Left lung (tissue), 14 donors: ENCODE measurements at regions of chr7 and their contacts with region 1.

Region 1: DNA sequence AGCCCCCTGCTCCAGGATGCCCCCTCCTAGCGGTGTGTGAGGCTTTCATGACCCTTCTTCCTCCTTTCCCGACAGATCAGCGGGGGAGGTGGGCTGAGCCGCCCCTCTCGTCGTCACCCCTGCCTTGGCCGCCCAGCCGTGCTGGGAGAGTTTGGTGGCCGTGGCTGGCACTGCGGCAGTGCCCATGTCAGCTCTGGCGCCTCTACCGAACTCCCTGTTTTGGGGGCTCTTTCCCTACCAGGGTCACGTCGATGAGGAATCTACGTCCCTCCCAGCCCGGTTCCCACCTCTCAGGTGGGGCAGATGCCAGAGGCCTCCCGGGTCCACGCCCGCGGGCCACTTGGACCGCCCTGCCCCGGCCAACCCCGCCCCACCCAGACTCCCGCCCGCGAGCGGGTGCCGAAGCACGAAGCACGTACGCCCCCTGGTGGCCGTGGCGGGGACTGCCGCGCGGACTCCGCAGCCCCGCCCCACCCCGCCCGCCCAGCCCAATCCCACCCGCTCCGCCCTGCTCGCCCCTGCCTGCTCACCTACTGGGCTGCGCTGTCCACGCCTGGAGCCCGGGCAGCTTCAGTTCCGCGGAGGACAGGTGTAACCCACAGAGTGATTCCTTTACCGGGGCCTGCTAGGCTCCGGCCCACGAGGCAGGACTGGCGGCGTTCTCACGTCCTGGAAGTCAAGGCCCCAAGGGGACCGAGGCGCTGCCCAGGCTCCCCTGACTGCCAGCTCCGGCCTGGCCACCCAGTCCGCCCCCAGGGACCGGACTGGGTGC is 127.1 kb downstream of the UBE2H start:
- DNase-seq: peak; percentile 84 to 100 (median 90)
- ATAC-seq: peak; percentile 88
- H3K4me3 ChIP-seq: peak overlapping the region; percentile 61 to 81
- H3K27ac ChIP-seq: peak overlapping the region; percentile 53 to 56
- H3K4me1 ChIP-seq: peaks cover 7 to 37% of the 10 kb centered on the region in 2 donors
- H3K27me3 ChIP-seq: no peaks in the 10 kb centered on the region
- CTCF ChIP-seq: peak; percentile 93 to 99

Region 2: DNA sequence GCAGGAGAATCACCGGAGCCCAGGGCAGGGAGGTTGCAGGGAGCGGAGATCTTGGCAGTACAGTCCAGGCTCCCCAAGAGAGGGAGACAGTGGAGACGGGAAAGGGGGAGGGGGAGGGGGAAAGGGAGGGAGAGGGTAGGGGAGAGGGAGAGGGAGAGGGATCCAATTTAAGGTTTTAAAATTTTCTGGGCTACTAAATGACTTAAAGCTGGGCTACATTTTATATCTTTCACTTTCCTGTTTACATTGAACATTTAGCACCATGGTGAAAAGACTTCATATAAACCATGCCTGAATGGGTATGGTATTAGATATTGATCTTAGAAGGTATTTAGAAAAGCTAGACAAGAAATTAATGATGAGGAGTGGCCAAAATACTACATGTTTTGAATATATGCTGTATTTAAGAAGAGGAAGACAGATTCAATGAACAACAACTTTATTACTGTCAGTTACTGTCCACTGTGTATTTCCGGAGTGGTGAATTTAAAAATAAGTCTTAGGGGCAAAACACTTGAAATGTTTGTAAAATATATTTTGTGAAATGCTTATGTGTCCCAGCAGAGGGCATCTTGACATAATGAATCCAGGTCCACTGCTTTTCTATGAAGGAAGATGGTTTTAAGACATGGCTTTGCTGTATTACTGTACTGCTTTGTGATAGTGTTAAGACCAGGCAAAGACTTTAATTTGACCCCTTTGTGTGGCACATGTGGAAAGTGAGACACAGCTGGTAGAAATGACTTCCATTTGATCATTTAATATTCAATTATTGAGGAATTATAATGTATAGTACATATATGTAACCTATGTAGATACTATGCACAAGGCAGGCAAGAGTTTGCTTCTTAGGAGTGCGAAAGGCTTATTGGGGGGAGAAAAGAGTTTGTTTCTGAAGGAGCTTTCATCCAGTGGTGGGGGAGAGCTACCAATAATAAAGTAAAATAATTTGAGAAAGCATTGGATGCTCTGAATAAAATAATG is 161.4 kb before region 1 on chr7:
- intact Hi-C with region 1: loop called in 1 of 2 experiments (anchors 5 kb)
- DNase-seq: peak in 2 of 4 donors; percentile 23 to 49
- ATAC-seq: peak; percentile 89
- H3K4me3 ChIP-seq: no peak overlapping the region
- H3K27ac ChIP-seq: peak overlapping the region in 1 of 2 donors; percentile 13
- H3K4me1 ChIP-seq: peaks cover 0 to 13% of the 10 kb centered on the region in 2 donors
- H3K27me3 ChIP-seq: no peaks in the 10 kb centered on the region
- CTCF ChIP-seq: peak; percentile 9 to 45

Region 3: GRCh38 chr7:129707910-129708499 is 117.7 kb before region 1 on chr7:
- intact Hi-C with region 1: no loop called
- DNase-seq: no peak
- ATAC-seq: no peak
- H3K4me3 ChIP-seq: no peak overlapping the region
- H3K27ac ChIP-seq: no peak overlapping the region
- H3K4me1 ChIP-seq: no peaks in the 10 kb centered on the region
- H3K27me3 ChIP-seq: no peaks in the 10 kb centered on the region
- CTCF ChIP-seq: no peak